Endothelial cell of umbilical vein (primary cell): ENCODE measurements at regions of chr3 and their contacts with region 1.

Region 1: GRCh38 chr3:79019137-79019923 is 748.5 kb downstream of the ROBO1 start:
- DNase-seq: peak; percentile 81
- H3K4me3 ChIP-seq: peak overlapping the region; percentile 43 to 96 (median 87)
- H3K27ac ChIP-seq: peak overlapping the region; percentile 82
- H3K4me1 ChIP-seq: peaks cover 14% of the 10 kb centered on the region
- H3K27me3 ChIP-seq: no peaks in the 10 kb centered on the region
- CTCF ChIP-seq: no peak
- POLR2A ChIP-seq: peak; percentile 54

Region 2: DNA sequence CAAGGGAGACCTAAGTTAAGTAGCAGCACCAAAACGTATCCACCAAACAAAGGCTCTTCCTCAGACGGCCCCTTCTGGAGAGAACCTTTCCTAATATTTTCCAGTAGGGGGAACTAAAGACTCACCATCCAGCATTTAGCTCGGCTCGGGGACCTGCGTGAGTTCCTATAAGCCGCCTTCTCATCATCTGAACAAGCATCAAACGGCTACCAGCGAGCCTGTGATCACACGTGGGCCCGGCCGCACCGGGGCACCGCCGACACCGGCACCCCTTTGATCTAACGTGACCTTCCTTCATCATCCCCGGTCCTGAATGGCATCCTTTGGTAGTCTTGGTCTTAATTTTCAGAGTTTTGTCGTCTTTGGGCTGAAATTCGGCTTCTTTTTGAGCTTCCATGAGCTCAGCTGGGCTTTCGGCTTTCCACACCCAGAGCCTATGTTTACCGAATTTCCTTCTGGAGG is 1980.8 kb before region 1 on chr3:
- CTCF ChIA-PET with region 1: no interaction called
- POLR2A ChIA-PET with region 1: no interaction called
- dilution Hi-C with region 1: no loop called
- intact Hi-C with region 1: loop called (anchors 5 kb)
- DNase-seq: peak; percentile 67
- H3K4me3 ChIP-seq: peak overlapping the region in 1 of 3 experiments; percentile 21
- H3K27ac ChIP-seq: no peak overlapping the region
- H3K4me1 ChIP-seq: peaks cover 11% of the 10 kb centered on the region
- H3K27me3 ChIP-seq: peaks cover 17 to 26% of the 10 kb centered on the region in 2 experiments
- CTCF ChIP-seq: peak; percentile 32 to 51
- POLR2A ChIP-seq: no peak

Region 3: DNA sequence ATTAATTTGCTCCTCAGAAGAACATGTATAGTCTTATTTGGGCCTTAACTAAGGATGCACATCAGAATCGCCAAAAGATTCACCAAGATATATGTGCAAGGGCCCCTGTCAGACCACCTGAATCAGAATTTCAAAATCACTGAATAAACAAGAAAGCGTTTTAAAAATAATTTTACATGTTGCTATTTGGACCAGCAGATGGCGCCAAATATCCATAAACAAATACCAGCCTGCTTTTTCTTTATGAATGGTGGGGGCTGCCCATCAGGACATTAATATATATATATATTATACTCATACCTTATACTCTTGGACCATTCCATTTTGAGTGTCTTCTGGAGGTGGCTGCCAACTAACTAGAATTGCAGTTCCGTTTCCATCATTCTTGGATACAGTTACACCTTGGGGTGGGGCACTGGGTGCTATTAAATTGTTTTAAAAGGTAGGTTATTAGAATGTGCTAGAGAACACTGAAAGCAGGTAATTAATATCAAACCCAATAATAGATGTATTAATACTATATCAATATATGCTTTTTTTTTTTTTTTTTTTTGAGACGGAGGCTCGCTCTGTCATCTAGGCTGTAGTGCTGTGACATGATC is 359.8 kb before region 1 on chr3:
- CTCF ChIA-PET with region 1: interaction called, 3 read pairs
- POLR2A ChIA-PET with region 1: no interaction called
- dilution Hi-C with region 1: no loop called
- intact Hi-C with region 1: loop called (anchors 5 kb)
- DNase-seq: peak; percentile 52
- H3K4me3 ChIP-seq: no peak overlapping the region
- H3K27ac ChIP-seq: no peak overlapping the region
- H3K4me1 ChIP-seq: no peaks in the 10 kb centered on the region
- H3K27me3 ChIP-seq: no peaks in the 10 kb centered on the region
- CTCF ChIP-seq: peak; percentile 20 to 29
- POLR2A ChIP-seq: no peak

Region 4: DNA sequence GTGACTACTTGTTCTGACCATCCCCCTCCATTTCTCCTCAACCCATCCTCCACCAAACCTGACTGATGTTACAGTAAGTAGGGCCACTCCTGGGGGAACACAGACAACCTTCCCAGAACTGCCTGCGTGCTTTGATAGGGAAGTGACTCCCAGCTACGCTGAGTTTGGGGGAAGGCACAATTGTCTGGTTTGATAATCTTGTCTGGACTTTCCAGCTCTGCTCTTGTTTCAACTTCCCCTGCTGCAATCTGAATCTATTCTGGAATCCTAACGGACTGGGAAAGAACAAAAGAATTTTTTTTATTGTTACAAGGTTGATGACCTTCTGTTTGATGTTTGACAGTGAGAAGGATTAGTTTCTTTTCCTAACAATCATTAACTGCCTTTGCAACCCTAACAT is 147.1 kb before region 1 on chr3:
- CTCF ChIA-PET with region 1: no interaction called
- POLR2A ChIA-PET with region 1: no interaction called
- dilution Hi-C with region 1: no loop called
- intact Hi-C with region 1: loop called (anchors 5 kb)
- DNase-seq: peak; percentile 79
- H3K4me3 ChIP-seq: no peak overlapping the region
- H3K27ac ChIP-seq: peak overlapping the region; percentile 11
- H3K4me1 ChIP-seq: peaks cover 18% of the 10 kb centered on the region
- H3K27me3 ChIP-seq: no peaks in the 10 kb centered on the region
- CTCF ChIP-seq: no peak
- POLR2A ChIP-seq: no peak

Region 5: GRCh38 chr3:78988324-78988723 is 31.0 kb before region 1 on chr3:
- CTCF ChIA-PET with region 1: interaction called, 13 read pairs
- POLR2A ChIA-PET with region 1: interaction called, 3 read pairs
- dilution Hi-C with region 1: no loop called
- intact Hi-C with region 1: no loop called
- DNase-seq: peak; percentile 26
- H3K4me3 ChIP-seq: no peak overlapping the region
- H3K27ac ChIP-seq: no peak overlapping the region
- H3K4me1 ChIP-seq: peaks cover 2% of the 10 kb centered on the region
- H3K27me3 ChIP-seq: no peaks in the 10 kb centered on the region
- CTCF ChIP-seq: peak in 1 of 2 donors; percentile 11
- POLR2A ChIP-seq: no peak

Region 6: DNA sequence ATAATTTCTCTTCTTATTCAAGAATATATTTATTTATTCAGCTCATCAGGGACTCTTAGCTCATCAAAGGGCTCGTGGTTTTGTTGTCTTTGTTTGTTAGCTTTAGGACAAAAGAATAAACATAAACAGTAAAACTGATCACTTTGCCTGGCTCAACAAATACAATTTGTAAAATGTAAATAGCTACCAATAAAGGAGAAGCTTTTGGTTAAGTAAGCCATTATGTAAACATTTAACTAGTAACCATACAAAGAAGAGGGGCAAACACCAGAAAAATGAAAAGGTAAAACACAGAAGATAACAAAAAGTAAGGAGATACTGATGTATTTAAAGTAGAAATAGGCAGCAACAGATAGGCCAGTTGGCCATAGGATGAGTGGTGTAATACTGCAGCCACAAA is 13.3 kb before region 1 on chr3:
- CTCF ChIA-PET with region 1: interaction called, 18 read pairs
- POLR2A ChIA-PET with region 1: interaction called, 3 read pairs
- dilution Hi-C with region 1: no loop called
- intact Hi-C with region 1: no loop called
- DNase-seq: no peak
- H3K4me3 ChIP-seq: no peak overlapping the region
- H3K27ac ChIP-seq: no peak overlapping the region
- H3K4me1 ChIP-seq: no peaks in the 10 kb centered on the region
- H3K27me3 ChIP-seq: no peaks in the 10 kb centered on the region
- CTCF ChIP-seq: no peak
- POLR2A ChIP-seq: no peak

Region 7: GRCh38 chr3:79032686-79033318 is 13.5 kb after region 1 on chr3:
- CTCF ChIA-PET with region 1: interaction called, 18 read pairs
- POLR2A ChIA-PET with region 1: no interaction called
- dilution Hi-C with region 1: no loop called
- intact Hi-C with region 1: no loop called
- DNase-seq: peak; percentile 62
- H3K4me3 ChIP-seq: no peak overlapping the region
- H3K27ac ChIP-seq: no peak overlapping the region
- H3K4me1 ChIP-seq: peaks cover 2% of the 10 kb centered on the region
- H3K27me3 ChIP-seq: no peaks in the 10 kb centered on the region
- CTCF ChIP-seq: peak; percentile 31 to 32
- POLR2A ChIP-seq: no peak

Region 8: GRCh38 chr3:79690072-79690471 is 670.7 kb after region 1 on chr3:
- CTCF ChIA-PET with region 1: no interaction called
- POLR2A ChIA-PET with region 1: no interaction called
- dilution Hi-C with region 1: no loop called
- intact Hi-C with region 1: no loop called
- DNase-seq: no peak
- H3K4me3 ChIP-seq: no peak overlapping the region
- H3K27ac ChIP-seq: no peak overlapping the region
- H3K4me1 ChIP-seq: no peaks in the 10 kb centered on the region
- H3K27me3 ChIP-seq: no peaks in the 10 kb centered on the region
- CTCF ChIP-seq: no peak
- POLR2A ChIP-seq: no peak